Cardiac septum (tissue), 1 donor: ENCODE measurements at regions of chr17 and their contacts with region 1.

Region 1: GRCh38 chr17:61927200-61928165 is at the start of gene INTS2:
- DNase-seq: peak; percentile 96
- total RNA-seq, gene INTS2: 14.9 TPM

Region 2: DNA sequence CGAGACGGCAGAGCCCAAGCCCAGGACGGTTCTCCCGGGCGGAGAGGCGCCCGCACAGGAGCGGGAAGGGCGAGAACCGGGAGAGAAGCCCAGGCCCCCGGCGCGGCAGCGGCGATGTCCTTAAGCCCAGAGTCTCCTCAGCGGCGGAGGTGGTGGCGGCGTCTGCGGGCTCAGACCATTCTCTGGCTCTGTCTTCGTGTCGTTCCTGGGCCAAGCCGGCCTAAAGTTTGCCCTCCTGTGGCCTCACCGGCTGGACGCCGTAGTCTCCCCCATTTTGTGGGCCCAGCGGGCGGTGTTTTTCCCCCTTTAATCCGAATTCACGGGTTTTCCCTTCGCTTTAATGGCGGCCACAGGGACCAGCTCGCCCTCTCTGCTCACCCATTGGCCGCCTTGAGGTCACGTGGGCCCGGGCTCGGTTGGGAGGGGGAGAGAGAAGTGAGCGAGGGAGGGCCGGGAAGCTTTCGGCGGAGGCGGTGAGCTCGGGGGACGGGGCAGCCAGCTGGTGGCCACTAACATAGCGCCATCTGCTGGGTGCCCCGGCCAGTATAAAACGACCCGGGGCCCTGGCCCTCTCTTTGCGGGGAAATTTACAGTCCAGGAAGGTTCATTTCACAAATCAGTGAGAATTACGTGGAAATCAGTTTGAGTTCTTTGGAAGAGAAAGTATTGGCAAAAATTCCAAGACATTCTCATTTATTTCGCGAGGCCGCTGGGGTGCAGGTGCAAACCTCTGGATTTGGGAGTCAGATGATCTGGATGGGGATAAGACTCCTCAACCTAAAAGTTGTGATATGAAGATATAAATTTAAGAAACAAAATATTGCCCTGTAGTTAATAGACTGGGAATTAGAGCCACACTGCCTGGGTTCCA is 138.3 kb after region 1 on chr17:
- intact Hi-C with region 1: loop called (anchors 2 kb)
- DNase-seq: peak; percentile 100